ENCODE measurements at regions of chr12 and their contacts with region 1.

Region 1: DNA sequence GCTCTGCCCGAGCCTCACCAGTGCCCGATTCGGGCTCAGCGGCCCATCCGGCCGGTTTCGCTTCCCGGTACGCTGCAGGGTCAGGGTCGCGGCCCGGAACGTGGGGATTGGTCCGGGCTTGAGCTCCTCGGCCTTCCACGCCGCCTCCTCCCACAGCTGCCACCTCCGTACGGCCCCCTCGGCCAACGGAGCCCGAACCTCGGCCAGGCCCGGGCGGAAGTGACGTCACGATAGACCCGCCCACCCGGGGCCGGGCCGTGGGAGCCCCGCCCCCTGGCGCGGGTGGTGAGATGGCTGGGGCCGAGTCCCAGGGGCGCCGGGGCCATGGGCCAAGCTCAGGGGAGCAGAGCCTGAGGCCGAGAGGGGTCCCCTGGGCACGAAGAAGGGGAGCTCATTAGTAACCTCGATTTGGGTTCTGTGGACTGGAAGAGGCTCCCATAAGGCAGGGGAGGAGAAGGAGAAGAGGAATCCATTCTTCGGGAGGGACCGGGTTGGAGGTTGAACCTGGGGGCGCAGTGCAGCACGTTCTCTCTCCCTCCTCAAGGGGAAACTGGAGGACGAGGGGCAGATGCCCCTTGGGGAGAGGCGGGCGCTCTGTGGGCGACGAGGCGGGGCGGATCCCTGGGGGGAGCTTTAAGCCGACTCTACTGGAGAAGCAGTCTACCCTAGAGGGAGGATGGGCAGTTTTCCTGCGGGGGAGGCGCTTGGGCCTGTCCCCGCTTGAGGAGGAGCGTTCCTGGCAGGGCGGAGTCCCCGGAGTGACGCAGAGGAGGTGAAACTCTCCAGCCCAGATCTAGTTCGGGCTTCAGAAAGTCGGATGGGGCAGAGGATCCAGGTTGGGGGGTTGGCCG is at the start of gene MLF2:
- DNase-seq: peak; percentile 99
- H3K4me3 ChIP-seq: peak within 1 kb of the TSS; percentile 84 to 91
- H3K27ac ChIP-seq: peak within 1 kb of the TSS; percentile 97 to 98
- H3K4me1 ChIP-seq: peaks cover 14 to 18% of the 10 kb centered on the region in 2 experiments
- H3K27me3 ChIP-seq: no peaks in the 10 kb centered on the region
- CTCF ChIP-seq: no peak; the same call in 1 of the 2 replicates
- EP300 ChIP-seq: peak in 1 of 2 experiments; percentile 22; a peak in 2 of 4 replicates
- RAD21 ChIP-seq: no peak
- polyA plus RNA-seq, gene MLF2: 535 and 624 TPM in 2 replicates

Region 2: GRCh38 chr12:6688999-6689882 is 63.9 kb before region 1 on chr12 and contains the start of gene ZNF384:
- CTCF ChIA-PET with region 1: interaction called, 19 read pairs
- POLR2A ChIA-PET with region 1: interaction called, 9 read pairs
- DNase-seq: peak; percentile 94
- H3K4me3 ChIP-seq: peak within 1 kb of the TSS; percentile 78 to 79
- H3K27ac ChIP-seq: peak within 1 kb of the TSS; percentile 90 to 99
- H3K4me1 ChIP-seq: peaks cover 8% of the 10 kb centered on the region in 2 experiments; a peak in 2 of 4 replicates
- H3K27me3 ChIP-seq: no peaks in the 10 kb centered on the region
- CTCF ChIP-seq: no peak
- EP300 ChIP-seq: no peak
- RAD21 ChIP-seq: no peak
- polyA plus RNA-seq, gene ZNF384: 64.9 and 80.4 TPM in 2 replicates

Region 3: DNA sequence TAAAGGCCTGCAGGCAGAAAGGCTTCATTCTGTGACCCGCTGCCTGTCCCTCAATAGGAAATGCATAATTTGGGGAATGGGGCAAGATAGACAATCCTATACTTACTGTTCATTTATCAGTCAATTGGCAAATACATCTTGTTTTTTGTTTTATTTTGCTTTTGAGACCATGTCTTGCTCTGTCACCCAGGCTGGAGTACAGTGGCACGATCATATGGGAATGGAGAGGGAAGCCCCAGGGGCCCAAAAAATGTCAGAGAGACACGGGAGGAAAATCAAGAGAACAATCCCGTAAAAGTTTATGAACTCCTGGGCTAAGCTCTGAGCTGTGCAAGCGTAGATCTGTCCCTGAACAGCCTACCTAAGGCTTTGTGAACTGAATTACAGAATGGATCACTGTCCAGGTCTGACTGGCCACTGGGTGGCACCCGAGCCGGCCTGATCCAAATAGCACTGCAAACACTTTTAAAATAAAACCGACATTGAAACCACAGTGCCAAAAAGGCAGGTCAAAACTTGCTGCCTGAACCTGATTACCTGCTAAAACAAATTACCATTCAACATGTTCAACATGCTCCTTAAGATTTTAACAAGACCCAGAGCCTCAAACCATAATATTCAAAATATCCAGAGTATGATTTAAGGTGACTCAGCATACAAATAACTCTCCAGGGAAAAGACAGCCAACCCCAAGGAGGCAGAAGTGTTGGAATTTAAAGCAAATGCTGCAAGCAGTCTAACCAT is 17.5 kb before region 1 on chr12:
- CTCF ChIA-PET with region 1: interaction called, 80 read pairs
- POLR2A ChIA-PET with region 1: interaction called, 3 read pairs
- DNase-seq: peak; percentile 76
- H3K4me3 ChIP-seq: no peak overlapping the region
- H3K27ac ChIP-seq: peak overlapping the region; percentile 39 to 50; a peak in 3 of 4 replicates
- H3K4me1 ChIP-seq: peaks cover 0 to 6% of the 10 kb centered on the region in 2 experiments; a peak in 1 of 4 replicates
- H3K27me3 ChIP-seq: no peaks in the 10 kb centered on the region
- CTCF ChIP-seq: peak; percentile 81
- EP300 ChIP-seq: no peak
- RAD21 ChIP-seq: peak; percentile 84

Region 4: GRCh38 chr12:6792522-6793201 is 39.5 kb after region 1 on chr12:
- CTCF ChIA-PET with region 1: interaction called, 17 read pairs
- POLR2A ChIA-PET with region 1: no interaction called
- DNase-seq: no peak
- H3K4me3 ChIP-seq: no peak overlapping the region
- H3K27ac ChIP-seq: no peak overlapping the region
- H3K4me1 ChIP-seq: peaks cover 0 to 9% of the 10 kb centered on the region in 2 experiments; a peak in 1 of 4 replicates
- H3K27me3 ChIP-seq: no peaks in the 10 kb centered on the region
- CTCF ChIP-seq: no peak
- EP300 ChIP-seq: no peak
- RAD21 ChIP-seq: no peak

Region 5: DNA sequence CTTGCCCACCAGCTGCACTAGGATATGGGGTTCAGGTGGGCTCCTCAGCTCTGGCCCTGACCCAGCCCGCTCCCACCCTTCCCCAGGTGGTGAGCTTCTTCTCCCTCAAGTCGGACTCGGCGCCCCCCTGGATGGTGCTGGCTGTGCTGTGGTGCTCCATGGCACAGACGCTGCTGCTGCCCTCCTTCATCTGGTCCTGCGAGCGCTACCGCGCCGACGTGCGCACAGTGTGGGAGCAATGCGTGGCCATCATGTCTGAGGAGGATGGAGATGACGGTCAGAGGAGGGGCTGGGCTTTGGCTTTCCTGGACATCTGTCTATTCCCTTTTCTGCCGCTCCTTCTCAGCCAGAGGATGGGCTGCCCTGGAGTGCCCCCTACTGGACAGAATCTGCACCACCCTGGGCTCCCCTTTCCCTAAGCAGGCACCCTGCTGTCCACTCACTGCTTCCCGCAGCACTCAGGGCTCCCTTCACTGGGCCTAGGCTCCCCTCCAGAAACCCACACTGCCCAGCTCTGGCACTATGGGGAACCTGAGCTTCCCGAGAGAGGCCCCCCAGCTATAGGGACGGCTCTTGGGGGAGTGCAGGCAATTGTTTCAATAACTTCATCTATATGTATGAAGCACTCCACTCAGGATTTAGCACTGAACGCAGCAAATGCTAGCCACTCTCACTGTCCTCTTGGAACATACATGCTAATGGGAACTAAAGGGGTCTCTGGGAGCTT is 72.4 kb after region 1 on chr12:
- CTCF ChIA-PET with region 1: interaction called, 246 read pairs
- POLR2A ChIA-PET with region 1: interaction called, 46 read pairs
- DNase-seq: peak; percentile 92
- H3K4me3 ChIP-seq: peak overlapping the region in 1 of 2 experiments; percentile 50; a peak in 2 of 4 replicates
- H3K27ac ChIP-seq: peak overlapping the region in 1 of 2 experiments; percentile 35; a peak in 1 of 4 replicates
- H3K4me1 ChIP-seq: peaks cover 23 to 60% of the 10 kb centered on the region in 2 experiments; a peak in 3 of 4 replicates
- H3K27me3 ChIP-seq: no peaks in the 10 kb centered on the region
- CTCF ChIP-seq: peak; percentile 88
- EP300 ChIP-seq: no peak; a peak in 1 of 4 replicates
- RAD21 ChIP-seq: peak; percentile 94

Region 6: GRCh38 chr12:6851921-6852650 is 98.9 kb after region 1 on chr12 and contains the start of gene USP5:
- CTCF ChIA-PET with region 1: interaction called, 19 read pairs
- POLR2A ChIA-PET with region 1: interaction called, 17 read pairs
- DNase-seq: peak; percentile 92
- H3K4me3 ChIP-seq: peak within 1 kb of the TSS; percentile 70 to 76
- H3K27ac ChIP-seq: peak within 1 kb of the TSS; percentile 73 to 97
- H3K4me1 ChIP-seq: peaks cover 7 to 17% of the 10 kb centered on the region in 2 experiments
- H3K27me3 ChIP-seq: no peaks in the 10 kb centered on the region
- CTCF ChIP-seq: 0 out of 2 replicates have a peak, but pooled peaks have one; percentile 7
- EP300 ChIP-seq: no peak
- RAD21 ChIP-seq: no peak
- polyA plus RNA-seq, gene USP5: 97.2 and 100 TPM in 2 replicates

Region 7: DNA sequence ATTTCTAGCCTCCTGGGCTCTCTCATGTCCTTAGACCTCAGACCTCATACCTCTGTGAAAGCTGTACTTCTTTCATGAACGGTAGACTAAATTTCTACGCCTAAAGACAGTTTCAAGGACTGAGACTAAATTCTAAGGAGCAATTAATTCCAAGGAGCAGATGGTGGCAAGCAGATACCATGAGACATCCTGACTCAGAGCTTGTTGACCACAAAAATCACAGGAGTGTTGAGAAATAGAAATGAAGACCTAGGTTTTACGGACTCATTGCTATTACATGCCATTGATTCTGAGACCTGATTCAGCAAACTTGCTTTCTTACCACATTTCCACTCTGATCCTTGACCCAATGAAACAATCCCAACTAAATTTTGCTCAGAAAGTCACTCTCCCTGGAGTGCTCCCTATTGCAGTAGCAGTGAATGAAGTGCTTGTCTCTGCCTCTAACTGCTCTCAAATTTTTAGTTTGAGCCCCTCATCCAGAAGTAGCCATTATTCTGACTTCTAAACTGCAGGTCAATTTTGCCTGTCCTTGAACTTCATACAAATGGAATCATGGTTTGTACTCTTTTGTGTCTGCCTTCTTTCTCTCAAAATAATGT is 488.4 kb after region 1 on chr12:
- CTCF ChIA-PET with region 1: no interaction called
- POLR2A ChIA-PET with region 1: no interaction called
- DNase-seq: no peak
- H3K4me3 ChIP-seq: no peak overlapping the region
- H3K27ac ChIP-seq: no peak overlapping the region
- H3K4me1 ChIP-seq: no peaks in the 10 kb centered on the region
- H3K27me3 ChIP-seq: peaks cover 11% of the 10 kb centered on the region; the same call in 1 of the 2 replicates
- CTCF ChIP-seq: no peak
- EP300 ChIP-seq: no peak
- RAD21 ChIP-seq: no peak

Region 8: DNA sequence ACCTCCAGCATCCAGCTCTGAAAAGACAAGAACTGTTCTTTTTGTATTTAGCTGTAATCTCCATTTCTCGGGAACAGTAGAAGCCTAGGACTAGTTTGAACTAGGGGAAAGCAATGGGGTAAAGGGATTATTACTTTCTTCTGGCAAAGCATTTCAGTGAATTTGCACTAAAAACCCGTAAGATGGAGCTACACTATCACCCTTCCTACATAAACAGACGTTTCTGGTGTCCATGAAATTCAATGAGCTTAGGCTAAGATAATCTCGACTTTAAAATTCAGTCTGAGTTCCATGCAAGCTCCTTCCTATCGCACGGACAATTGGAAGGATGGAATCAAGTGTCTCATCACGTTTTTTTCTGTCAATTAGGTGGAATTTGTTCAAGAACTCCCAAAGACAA is 574.8 kb after region 1 on chr12:
- CTCF ChIA-PET with region 1: no interaction called
- POLR2A ChIA-PET with region 1: no interaction called
- DNase-seq: no peak
- H3K4me3 ChIP-seq: no peak overlapping the region
- H3K27ac ChIP-seq: no peak overlapping the region
- H3K4me1 ChIP-seq: no peaks in the 10 kb centered on the region
- H3K27me3 ChIP-seq: no peaks in the 10 kb centered on the region
- CTCF ChIP-seq: peak; percentile 21; the same call in 1 of the 2 replicates
- EP300 ChIP-seq: no peak
- RAD21 ChIP-seq: no peak

Measured in SK-N-SH (cell line).